ENCODE measurements at regions of chr4 and their contacts with region 1.

Region 1: DNA sequence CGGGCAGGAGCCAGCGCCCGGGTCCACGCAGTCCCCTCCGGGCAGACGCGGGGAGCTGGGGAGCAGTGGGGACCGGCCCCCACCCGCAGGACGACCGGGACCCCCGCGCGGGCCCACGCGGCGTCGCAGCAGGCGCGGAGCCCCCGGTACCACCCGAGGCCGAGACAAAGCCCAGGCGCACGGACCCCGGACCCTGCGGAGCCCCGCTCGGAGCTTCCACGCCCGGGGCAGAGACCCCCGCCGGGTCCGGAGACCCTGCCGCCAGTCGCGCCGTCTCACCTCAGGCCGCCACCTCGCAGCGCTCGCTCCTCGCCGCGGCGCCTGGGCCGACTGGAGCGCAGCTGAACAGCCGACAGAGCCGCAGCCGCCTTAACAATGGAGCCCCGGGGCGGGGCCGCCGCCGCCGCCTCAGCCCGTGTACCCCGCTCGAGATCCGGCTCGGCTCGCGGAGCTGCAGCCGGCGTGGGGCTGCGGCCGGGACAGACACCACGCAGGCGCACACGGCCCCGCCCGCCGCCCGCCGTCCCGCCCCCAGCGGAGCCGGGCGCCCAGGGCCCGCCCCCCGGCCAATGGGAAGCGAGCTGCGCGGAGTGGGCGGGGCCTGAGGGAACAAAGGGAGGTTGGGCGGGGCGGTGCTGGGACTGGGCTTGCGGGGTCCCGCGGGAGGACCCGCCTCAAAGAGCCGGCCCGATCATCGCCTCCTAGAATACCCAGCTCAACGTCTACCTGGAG is at the start of gene AFAP1:
- DNase-seq: peak; percentile 84

Region 2: DNA sequence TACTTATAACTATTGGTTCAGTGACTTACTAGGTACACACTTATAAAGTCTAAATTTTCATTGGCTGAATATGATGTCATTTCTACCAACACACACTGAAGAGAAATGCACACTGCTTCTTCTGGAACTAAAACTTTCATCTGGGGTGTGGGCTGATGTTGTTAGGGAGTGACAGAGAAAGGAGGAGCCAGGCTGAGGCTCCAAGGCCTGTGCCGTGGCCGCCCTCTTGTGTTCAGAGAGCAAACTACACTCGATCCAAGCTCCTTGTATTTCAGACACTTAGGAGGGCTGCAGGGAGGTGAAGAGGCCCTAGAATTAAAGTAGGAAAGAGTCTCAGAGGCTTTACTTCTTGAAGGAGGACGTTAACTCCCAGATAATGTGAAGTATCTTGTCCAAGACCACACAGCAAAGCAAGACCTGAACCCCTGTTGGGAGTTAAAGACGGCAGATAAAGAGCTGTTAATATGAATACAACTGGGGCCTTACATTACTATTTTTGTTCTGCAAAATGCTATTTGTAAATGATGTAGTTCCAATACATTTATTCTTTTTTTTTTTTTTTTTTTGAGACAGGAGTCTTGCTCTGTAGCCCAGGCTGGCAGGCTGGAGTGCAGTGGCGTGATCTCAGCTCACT is 137.3 kb before region 1 on chr4:
- in situ Hi-C with region 1: loop called (anchors 25 kb)
- DNase-seq: peak; percentile 67